ENCODE measurements at regions of chr1 and their contacts with region 1.

Region 1: GRCh38 chr1:183956559-183957188 is 80.9 kb downstream of the COLGALT2 start:
- DNase-seq: peak; percentile 69
- H3K4me3 Mint-ChIP-seq: peak overlapping the region; percentile 62
- H3K27ac Mint-ChIP-seq: no peak overlapping the region
- H3K4me1 Mint-ChIP-seq: peaks cover 14% of the 10 kb centered on the region
- H3K27me3 Mint-ChIP-seq: no peaks in the 10 kb centered on the region

Region 2: DNA sequence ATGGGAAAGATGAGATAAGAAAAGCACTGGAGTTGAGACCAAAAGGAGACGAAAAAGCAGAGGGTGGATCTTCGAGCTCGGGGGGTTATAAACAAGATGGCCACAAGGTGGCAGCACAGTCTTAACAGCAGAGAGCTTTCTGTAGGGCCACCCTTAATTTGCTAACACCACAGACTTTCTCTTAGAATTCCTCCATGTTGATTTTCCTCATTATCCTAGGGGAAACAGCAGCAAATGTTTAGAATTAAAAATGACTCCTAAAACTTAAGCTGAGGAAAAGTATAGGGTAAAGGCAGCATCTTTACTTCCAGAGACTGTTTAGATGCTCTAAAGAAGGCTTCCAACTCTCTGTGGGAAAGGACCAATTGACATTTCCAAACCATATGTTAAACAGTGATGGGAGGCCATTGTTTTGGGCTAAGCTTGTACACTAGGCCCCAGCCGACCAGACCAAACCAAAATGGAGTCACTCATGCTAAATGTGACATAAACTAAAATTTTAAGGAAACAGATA is 301.1 kb before region 1 on chr1:
- intact Hi-C with region 1: loop called (anchors 1 kb)
- DNase-seq: peak; percentile 52
- H3K4me3 Mint-ChIP-seq: no peak overlapping the region
- H3K27ac Mint-ChIP-seq: peak overlapping the region; percentile 0
- H3K4me1 Mint-ChIP-seq: peaks cover 48% of the 10 kb centered on the region
- H3K27me3 Mint-ChIP-seq: no peaks in the 10 kb centered on the region

Region 3: GRCh38 chr1:183915625-183916510 is 40.8 kb before region 1 on chr1:
- intact Hi-C with region 1: loop called (anchors 2 kb)
- DNase-seq: peak; percentile 69
- H3K4me3 Mint-ChIP-seq: no peak overlapping the region
- H3K27ac Mint-ChIP-seq: peak overlapping the region; percentile 33
- H3K4me1 Mint-ChIP-seq: peaks cover 21% of the 10 kb centered on the region
- H3K27me3 Mint-ChIP-seq: no peaks in the 10 kb centered on the region

Region 4: DNA sequence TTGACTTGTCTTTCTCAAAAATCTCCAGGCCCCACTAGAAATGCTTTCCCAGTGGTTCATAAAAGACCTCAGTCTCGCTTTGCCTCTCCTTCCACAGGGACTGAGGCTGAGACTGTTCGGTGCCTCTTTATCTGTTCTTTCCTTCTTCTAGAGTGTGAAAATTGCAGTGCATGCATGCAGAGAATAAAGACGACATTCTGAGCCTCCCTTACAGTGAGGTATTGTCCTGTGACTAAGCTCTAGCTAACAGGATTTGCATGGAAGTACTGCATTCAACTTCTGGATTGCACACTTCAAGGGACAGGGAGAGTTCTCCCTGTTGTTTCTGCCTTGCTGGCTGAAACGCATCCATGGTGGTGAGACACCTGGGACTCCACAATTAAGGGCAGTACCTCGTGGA is 11.7 kb after region 1 on chr1:
- intact Hi-C with region 1: loop called (anchors 1 kb)
- DNase-seq: no peak
- H3K4me3 Mint-ChIP-seq: no peak overlapping the region
- H3K27ac Mint-ChIP-seq: no peak overlapping the region
- H3K4me1 Mint-ChIP-seq: peaks cover 29% of the 10 kb centered on the region
- H3K27me3 Mint-ChIP-seq: peaks cover 20% of the 10 kb centered on the region

Region 5: GRCh38 chr1:184037849-184038591 is 81.3 kb after region 1 on chr1:
- intact Hi-C with region 1: loop called (anchors 1 kb)
- DNase-seq: no peak
- H3K4me3 Mint-ChIP-seq: peak overlapping the region; percentile 68
- H3K27ac Mint-ChIP-seq: peak overlapping the region; percentile 42
- H3K4me1 Mint-ChIP-seq: peaks cover 26% of the 10 kb centered on the region
- H3K27me3 Mint-ChIP-seq: peaks cover 65% of the 10 kb centered on the region

Region 6: DNA sequence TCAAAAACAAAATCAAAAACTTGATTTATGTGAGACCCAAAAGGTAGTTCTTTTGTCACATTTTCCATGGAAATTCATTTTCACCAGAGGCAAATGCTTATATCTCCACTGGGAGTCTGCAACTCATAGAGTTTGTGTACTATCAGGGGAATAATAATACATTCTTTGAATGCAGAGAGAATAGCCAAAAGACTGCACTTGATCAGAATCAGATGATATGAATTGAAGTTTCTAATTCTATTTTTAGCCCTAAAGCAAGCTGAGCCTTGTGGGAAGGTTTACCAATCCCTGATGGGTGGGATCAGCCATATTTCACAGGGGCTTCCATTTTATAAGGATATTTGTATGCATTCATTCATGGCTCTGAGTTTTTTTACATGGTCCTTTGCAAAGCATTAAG is 144.5 kb after region 1 on chr1:
- intact Hi-C with region 1: no loop called
- DNase-seq: no peak
- H3K4me3 Mint-ChIP-seq: no peak overlapping the region
- H3K27ac Mint-ChIP-seq: no peak overlapping the region
- H3K4me1 Mint-ChIP-seq: no peaks in the 10 kb centered on the region
- H3K27me3 Mint-ChIP-seq: peaks cover 2% of the 10 kb centered on the region

Region 7: DNA sequence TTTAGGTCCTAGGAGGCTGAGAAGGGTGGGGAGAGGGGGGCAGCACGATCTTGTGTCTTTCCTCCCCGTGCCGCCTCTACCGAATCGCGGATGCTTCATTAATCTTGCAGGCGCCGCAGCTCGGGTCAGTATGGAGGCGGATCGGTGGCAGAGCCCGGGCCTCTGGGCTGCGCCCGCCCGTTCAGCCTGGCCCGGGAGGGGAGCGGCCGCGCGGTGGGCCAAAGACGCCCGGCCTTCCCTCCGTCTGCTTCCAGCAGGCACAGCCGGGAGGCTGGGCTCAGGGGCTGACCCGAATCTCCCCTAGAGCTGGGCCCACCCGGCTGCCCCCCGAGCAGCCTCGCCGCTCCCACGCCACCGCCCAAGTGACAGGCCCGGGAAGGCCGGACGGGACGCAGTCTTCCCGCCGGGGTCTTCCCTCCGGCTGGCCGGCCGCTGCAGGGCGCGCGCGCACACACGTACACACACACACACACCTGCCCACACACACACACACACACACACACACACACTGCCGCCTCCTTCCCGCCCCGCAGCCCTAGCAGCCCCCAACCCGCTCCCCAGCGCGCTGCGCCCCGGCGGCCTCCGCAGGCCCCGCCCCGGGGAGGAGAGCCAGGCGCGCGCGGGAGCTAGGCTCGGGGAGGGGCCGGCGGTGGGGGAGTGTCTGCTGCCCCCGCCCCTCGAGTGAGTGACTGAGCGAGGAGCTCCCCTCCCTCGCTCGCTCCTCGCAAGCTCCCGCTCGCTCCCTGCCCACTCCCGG is 429.8 kb after region 1 on chr1 and contains the start of gene C1orf21:
- intact Hi-C with region 1: loop called (anchors 2 kb)
- DNase-seq: peak; percentile 75
- H3K4me3 Mint-ChIP-seq: peak within 1 kb of the TSS; percentile 86
- H3K27ac Mint-ChIP-seq: peak within 1 kb of the TSS; percentile 53
- H3K4me1 Mint-ChIP-seq: peaks cover 12% of the 10 kb centered on the region
- H3K27me3 Mint-ChIP-seq: peaks cover 71% of the 10 kb centered on the region
- total RNA-seq, gene C1orf21: 1.8 and 4.1 TPM in 2 replicates